AG04449 (cell line): ENCODE measurements at regions of chr5 and their contacts with region 1.

Region 1: DNA sequence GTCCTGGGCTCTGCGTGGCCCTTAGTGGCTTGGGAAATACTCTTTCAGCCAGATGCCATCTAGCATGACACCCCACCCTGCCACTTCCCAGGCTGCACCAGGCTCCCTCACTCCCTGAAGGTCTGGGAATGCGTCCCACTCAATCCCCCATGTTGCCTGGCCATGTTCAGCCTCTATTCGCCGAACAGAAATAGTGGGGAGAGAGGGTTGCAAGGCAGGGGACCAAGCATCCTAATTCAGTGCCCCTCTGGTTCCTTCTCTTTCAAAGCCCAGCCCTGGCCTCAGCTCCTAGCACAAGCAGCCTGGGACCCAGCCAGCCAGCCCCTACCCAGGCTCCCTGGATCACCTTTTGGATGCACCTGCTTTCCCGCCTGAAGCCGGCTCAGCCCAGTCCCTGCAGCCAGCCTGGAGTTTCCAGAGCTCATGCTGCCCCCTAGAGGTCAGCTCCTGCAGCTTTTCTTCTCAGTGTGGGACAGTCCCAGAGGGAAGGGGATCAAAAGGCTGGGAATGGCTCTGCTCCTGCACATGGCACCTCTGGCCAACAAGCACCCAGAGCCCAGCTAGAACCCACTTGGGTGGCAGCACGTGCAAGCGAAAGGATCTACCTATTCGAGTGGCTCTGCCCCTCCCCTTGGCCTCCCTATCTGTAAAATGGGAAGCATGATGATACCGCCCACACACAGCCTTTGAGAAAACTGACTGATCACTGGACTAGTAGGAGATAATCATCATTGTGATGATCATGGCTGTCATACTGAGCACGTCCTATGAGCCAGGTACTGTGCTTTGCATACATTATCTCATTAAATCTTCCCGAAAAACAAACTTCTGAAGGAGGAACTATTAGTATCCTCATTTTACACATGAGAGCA is 48.7 kb upstream of the C5orf58 start:
- DNase-seq: no peak
- H3K4me3 ChIP-seq: no peak overlapping the region
- CTCF ChIP-seq: peak; percentile 87

Region 2: GRCh38 chr5:169701910-169702451 is 482.1 kb before region 1 on chr5:
- CTCF ChIA-PET with region 1: interaction called, 12 read pairs
- POLR2A ChIA-PET with region 1: no interaction called
- DNase-seq: no peak
- H3K4me3 ChIP-seq: no peak overlapping the region
- CTCF ChIP-seq: peak; percentile 54

Region 3: DNA sequence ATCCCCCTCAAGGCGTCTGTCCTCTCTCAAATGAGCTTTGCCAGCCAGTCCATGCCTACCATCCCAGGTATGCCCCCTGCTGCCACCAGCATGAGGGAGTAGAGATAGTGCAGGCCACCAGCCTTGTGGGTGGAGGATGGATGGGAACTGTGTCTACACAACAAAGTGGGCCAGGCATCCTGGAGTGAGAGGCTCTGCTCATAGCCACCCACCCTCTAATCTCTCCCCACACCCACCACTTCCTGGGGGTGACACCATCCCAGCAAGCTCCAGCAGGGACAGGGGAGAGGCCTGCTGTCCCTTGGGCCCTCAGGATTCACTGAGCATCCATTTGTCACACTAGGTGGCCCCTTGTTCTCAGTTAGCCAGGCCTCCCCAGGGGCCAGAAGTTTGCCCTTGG is 103.8 kb before region 1 on chr5:
- CTCF ChIA-PET with region 1: interaction called, 12 read pairs
- POLR2A ChIA-PET with region 1: no interaction called
- DNase-seq: no peak
- H3K4me3 ChIP-seq: no peak overlapping the region
- CTCF ChIP-seq: no peak

Region 4: DNA sequence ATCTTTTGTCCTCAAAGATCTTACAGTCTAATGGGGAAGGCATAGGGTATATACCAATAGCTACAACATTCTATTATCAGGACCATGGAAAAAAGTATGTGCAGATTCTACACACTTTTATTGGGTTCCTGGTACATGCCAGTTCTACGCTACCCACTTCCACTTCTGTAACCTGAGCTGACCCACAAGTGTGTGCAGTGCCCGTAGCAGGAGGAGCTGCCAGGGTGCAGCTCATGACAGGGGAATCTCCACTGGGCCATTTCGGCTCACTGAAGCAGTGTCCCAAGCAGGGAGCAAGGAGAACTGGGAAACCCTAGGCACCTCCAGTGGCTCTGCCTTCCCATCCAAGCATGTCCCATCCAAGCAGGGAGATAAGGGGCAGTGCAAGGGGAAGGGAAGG is 18.0 kb before region 1 on chr5:
- CTCF ChIA-PET with region 1: interaction called, 65 read pairs
- POLR2A ChIA-PET with region 1: no interaction called
- DNase-seq: no peak
- H3K4me3 ChIP-seq: no peak overlapping the region
- CTCF ChIP-seq: no peak

Region 5: DNA sequence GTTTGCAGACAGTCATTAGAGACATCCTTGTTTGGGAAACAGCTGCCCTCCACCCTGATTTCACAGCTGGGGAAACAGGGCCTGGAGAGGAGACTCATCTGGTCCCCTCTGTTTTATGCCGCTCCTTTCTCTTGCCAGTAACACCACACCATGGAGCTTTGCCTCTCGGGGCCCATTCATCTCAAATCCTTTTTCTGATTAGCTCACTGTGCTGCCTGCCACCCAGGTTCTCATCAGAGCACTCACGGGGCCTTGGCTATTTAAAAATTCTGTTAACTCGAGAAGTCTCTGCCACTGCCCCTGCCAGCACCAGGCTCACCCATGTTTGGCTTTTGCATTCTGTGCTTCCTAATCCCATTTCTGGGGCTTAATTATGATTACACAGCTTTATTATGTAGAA is 11.9 kb after region 1 on chr5:
- CTCF ChIA-PET with region 1: interaction called, 96 read pairs
- POLR2A ChIA-PET with region 1: no interaction called
- DNase-seq: no peak
- H3K4me3 ChIP-seq: no peak overlapping the region
- CTCF ChIP-seq: no peak